Heart left ventricle (tissue), 16 donors: ENCODE measurements at regions of chr7 and their contacts with region 1.

Region 1: GRCh38 chr7:17769918-17770317 is 170.4 kb downstream of the SNX13 start:
- DNase-seq: peak; percentile 28 to 55 (median 44)
- ATAC-seq: peak in 3 of 4 donors; percentile 57 to 66 (median 58)
- H3K4me3 ChIP-seq: no peak overlapping the region
- H3K27ac ChIP-seq: peak overlapping the region in 1 of 12 donors; percentile 46
- H3K4me1 ChIP-seq: peaks cover 0 to 39% (median 9%) of the 10 kb centered on the region in 12 donors
- H3K27me3 ChIP-seq: no peaks in the 10 kb centered on the region
- CTCF ChIP-seq: peak; percentile 46 to 74 (median 68)
- POLR2A ChIP-seq: no peak

Region 2: DNA sequence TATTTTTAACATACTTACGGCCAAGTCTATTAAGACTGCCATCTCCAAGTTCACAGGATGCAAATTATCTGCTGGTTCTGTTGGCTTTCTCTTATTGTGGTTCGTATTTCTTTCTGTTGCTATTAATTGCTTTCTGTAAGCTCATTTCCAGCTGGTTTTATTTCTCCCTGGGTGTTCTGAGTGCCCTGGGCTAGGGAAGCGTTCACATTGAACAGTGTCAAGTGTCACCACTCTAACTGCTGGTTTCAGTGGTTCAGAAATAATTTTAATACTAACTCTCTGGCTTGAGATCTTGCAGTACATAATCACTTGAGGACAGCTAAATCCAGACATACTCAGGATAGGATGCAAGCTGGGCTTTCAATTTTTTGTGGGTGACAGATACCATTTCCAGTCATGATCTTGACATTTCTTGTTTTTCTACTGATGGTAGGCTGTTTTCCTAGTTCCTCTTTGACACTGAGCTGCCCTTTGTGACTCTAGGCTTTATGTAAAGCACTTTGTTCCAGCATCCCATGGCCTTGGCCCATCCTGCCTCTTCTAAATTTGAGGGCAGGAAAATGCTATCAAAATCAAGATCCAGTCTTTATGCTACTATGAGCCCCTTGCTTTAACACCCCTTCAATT is 52.7 kb after region 1 on chr7:
- intact Hi-C with region 1: no loop called
- DNase-seq: no peak
- ATAC-seq: peak in 2 of 4 donors; percentile 26 to 57
- H3K4me3 ChIP-seq: no peak overlapping the region
- H3K27ac ChIP-seq: peak overlapping the region in 1 of 12 donors; percentile 4
- H3K4me1 ChIP-seq: peaks cover 0 to 6% (median 0%) of the 10 kb centered on the region in 12 donors
- H3K27me3 ChIP-seq: no peaks in the 10 kb centered on the region
- CTCF ChIP-seq: no peak
- POLR2A ChIP-seq: no peak

Region 3: GRCh38 chr7:17940302-17940883 is 170.5 kb after region 1 on chr7 and contains the start of gene SNX13:
- intact Hi-C with region 1: loop called in 3 of 10 experiments (anchors 5 to 10 kb)
- DNase-seq: peak; percentile 92 to 97 (median 95)
- ATAC-seq: peak; percentile 96 to 99 (median 98)
- H3K4me3 ChIP-seq: peak within 1 kb of the TSS; percentile 80 to 94 (median 88)
- H3K27ac ChIP-seq: peak within 1 kb of the TSS; percentile 85 to 98 (median 96)
- H3K4me1 ChIP-seq: peaks cover 0 to 52% (median 32%) of the 10 kb centered on the region in 12 donors
- H3K27me3 ChIP-seq: no peaks in the 10 kb centered on the region
- CTCF ChIP-seq: peak in 10 of 12 donors; percentile 26 to 65 (median 37)
- POLR2A ChIP-seq: peak in 1 of 2 donors; percentile 78
- total RNA-seq, gene SNX13: 36.1 to 59.6 (median 50.9) TPM

Region 4: DNA sequence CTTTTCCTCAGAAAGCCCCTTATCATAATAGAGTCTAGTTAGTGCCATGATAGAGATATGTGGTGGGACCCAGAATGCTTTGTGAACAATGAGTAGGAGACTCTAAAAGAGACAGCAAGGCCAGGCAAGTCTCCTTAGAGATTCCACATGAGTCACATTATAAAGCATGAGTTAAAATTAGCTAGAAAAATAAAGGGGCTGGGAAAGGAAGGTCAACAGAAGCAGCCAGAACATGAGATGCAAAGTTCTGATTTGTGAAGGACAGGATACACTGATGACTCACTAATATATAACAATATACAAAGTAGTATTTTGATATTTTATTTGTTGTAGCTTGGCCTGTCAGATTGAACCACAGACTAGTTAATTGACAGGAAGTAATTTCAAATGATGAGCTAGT is 195.7 kb after region 1 on chr7:
- intact Hi-C with region 1: loop called in 1 of 10 experiments (anchors 10 kb)
- DNase-seq: no peak
- ATAC-seq: no peak
- H3K4me3 ChIP-seq: no peak overlapping the region
- H3K27ac ChIP-seq: no peak overlapping the region
- H3K4me1 ChIP-seq: no peaks in the 10 kb centered on the region
- H3K27me3 ChIP-seq: no peaks in the 10 kb centered on the region
- CTCF ChIP-seq: no peak
- POLR2A ChIP-seq: no peak